ENCODE measurements at regions of chr22 and their contacts with region 1.

Region 1: DNA sequence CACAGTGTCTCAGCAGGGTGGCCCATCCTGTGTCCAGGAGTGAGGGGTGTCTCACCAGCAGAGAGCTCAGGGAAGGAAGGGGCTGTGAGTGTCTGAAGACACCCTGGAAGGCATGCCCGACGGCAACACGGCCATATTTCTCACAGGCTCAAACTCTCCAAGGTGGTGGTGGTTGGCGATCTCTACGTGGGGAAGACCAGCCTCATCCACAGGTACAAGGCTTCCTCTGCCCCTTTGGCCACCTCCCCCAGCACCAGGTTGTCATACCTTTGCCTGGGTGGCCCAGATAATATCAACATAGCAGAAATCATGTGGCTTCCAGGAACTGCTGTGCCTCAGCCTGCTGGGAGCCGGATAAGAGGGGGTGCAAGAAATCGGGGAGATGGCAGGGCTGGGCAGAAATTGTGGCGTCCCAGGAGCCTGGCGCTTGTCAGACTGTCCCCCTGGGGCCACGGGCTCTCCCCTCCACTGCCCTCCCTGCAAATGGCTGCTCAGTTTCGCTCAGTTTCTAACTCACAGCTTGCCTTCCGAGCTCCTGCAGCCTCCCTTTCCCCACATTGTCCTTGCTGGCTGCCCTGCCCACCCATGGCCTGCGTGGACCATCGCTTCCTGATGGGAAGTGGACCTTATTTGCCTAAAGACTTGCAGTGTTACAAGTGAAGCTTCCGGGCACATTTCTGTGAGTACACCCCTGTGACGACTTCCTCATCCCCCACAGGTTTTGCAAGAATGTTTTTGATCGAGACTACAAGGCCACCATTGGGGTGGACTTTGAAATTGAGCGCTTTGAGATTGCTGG is 7.2 kb downstream of the RAB36 start:
- DNase-seq: no peak
- ATAC-seq: no peak
- H3K4me3 Mint-ChIP-seq: no peak overlapping the region
- H3K27ac Mint-ChIP-seq: no peak overlapping the region
- H3K4me1 Mint-ChIP-seq: peaks cover 47% of the 10 kb centered on the region
- H3K27me3 Mint-ChIP-seq: peaks cover 4% of the 10 kb centered on the region
- CTCF ChIP-seq: no peak

Region 2: GRCh38 chr22:23137905-23138561 is 14.5 kb before region 1 on chr22:
- CTCF ChIA-PET with region 1: interaction called, 40 read pairs
- POLR2A ChIA-PET with region 1: interaction called, 3 read pairs
- DNase-seq: no peak
- ATAC-seq: no peak
- H3K4me3 Mint-ChIP-seq: no peak overlapping the region
- H3K27ac Mint-ChIP-seq: no peak overlapping the region
- H3K4me1 Mint-ChIP-seq: peaks cover 20% of the 10 kb centered on the region
- H3K27me3 Mint-ChIP-seq: 0 out of 2 replicates have a peak, but pooled peaks cover 3% of the 10 kb centered on the region
- CTCF ChIP-seq: no peak

Region 3: DNA sequence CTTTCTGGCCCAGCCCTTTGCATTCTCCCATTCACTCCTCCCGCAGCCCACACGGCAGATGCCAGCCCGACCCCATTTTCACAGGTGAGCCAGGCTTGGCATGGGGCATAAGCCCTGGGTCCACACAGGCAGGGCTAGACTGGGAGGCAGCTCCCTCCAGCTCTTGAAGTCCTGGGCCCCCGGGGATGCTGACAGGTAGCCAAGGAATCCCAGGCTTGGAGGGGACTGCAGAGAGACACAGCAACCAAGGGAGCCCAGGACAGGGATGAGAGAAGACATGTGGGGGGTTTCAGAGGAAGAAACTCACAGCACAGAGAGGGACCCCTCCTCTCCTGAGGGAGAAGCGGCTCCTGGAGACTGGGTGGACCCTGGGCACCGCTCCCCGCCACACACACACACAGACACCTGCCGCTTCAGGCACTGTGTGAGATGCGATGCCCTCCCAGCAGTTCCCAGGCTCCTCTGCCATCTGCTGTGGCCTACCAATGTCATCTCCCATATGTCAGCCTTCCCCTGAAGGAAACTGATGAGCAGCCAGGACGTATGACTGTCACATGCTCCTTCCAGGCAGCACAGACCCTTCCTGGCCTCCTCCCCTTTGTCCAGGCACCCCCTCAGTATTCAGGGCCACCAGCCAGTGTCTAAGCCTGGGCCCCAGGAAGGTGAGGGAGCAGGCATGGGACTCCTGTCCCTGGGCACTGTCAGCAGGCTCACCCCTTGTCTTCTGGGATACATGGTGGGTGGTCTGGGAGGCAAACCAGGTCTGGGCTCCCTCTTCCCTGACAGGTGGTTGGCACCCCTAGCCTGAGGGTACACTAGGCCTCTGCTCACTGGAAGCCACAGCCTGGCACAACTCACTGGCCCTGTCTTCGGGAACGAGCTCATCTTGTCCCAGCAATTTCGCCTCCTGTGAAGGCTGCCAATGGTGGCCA is 15.9 kb after region 1 on chr22:
- CTCF ChIA-PET with region 1: interaction called, 42 read pairs
- POLR2A ChIA-PET with region 1: no interaction called
- DNase-seq: no peak
- ATAC-seq: no peak
- H3K4me3 Mint-ChIP-seq: no peak overlapping the region
- H3K27ac Mint-ChIP-seq: no peak overlapping the region
- H3K4me1 Mint-ChIP-seq: peaks cover 11% of the 10 kb centered on the region
- H3K27me3 Mint-ChIP-seq: no peaks in the 10 kb centered on the region
- CTCF ChIP-seq: no peak

Region 4: DNA sequence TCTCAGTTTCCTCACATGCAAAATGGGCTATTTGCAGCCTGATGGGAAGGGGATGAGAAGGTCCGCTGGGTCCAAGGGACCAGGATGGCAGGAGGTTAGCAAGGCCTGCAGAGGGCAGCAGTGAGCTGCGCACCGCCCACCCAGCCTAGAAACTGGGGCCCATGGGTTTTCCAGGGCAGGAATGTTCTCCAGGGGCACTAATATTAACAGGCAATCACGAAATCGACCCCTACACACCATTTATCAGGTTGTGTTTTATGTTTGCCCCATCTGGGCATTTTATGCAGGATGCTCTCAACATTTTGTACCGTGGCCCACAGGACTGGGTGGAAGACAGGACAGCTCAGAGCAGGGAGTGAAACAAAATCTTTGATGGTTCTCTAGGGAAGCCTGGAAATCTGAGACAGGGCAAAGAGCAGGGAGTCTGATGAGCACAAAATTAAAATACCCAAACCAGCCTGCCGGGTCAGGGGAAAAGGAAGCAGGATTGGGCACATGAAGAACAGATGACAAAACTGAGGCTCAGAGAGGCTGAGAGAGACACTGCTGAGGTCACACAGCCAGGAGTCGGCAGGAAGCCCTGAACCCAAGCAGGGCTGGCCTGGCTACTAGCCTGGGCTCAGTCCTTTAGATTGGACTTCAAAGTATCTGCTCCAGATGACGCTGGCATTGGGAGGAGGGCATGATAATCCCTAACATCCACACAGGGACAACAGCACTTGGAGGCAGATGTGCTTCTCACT is 26.2 kb after region 1 on chr22:
- CTCF ChIA-PET with region 1: interaction called, 29 read pairs
- POLR2A ChIA-PET with region 1: no interaction called
- DNase-seq: peak; percentile 84
- ATAC-seq: peak; percentile 57
- H3K4me3 Mint-ChIP-seq: no peak overlapping the region; the same call in 1 of the 2 replicates
- H3K27ac Mint-ChIP-seq: no peak overlapping the region
- H3K4me1 Mint-ChIP-seq: peaks cover 39% of the 10 kb centered on the region
- H3K27me3 Mint-ChIP-seq: no peaks in the 10 kb centered on the region; the same call in none of the 2 replicates
- CTCF ChIP-seq: peak; percentile 88